PC-3 (cell line): ENCODE measurements at regions of chrX and their contacts with region 1.

Region 1: GRCh38 chrX:125327891-125328290 is 8.2 kb downstream of the TEX13C start:
- DNase-seq: no peak
- ATAC-seq: no peak
- H3K4me3 ChIP-seq: no peak overlapping the region
- H3K27ac ChIP-seq: no peak overlapping the region
- H3K4me1 ChIP-seq: peaks cover 11% of the 10 kb centered on the region; the same call in 1 of the 2 replicates
- H3K27me3 ChIP-seq: no peaks in the 10 kb centered on the region
- CTCF ChIP-seq: no peak

Region 2: GRCh38 chrX:125289920-125290319 is 38.0 kb before region 1 on chrX:
- CTCF ChIA-PET with region 1: no interaction called
- POLR2A ChIA-PET with region 1: no interaction called
- intact Hi-C with region 1: loop called (anchors 2 kb)
- DNase-seq: peak; percentile 64
- ATAC-seq: peak; percentile 64
- H3K4me3 ChIP-seq: peak overlapping the region; percentile 46
- H3K27ac ChIP-seq: peak overlapping the region; percentile 98
- H3K4me1 ChIP-seq: peaks cover 49% of the 10 kb centered on the region
- H3K27me3 ChIP-seq: no peaks in the 10 kb centered on the region
- CTCF ChIP-seq: no peak

Region 3: GRCh38 chrX:125306335-125306866 is 21.5 kb before region 1 on chrX:
- CTCF ChIA-PET with region 1: no interaction called
- POLR2A ChIA-PET with region 1: no interaction called
- intact Hi-C with region 1: loop called (anchors 1 kb)
- DNase-seq: no peak
- ATAC-seq: no peak
- H3K4me3 ChIP-seq: no peak overlapping the region
- H3K27ac ChIP-seq: no peak overlapping the region
- H3K4me1 ChIP-seq: peaks cover 4% of the 10 kb centered on the region; the same call in 1 of the 2 replicates
- H3K27me3 ChIP-seq: no peaks in the 10 kb centered on the region
- CTCF ChIP-seq: no peak